Transverse colon (tissue), 4 donors: ENCODE measurements at regions of chr11 and their contacts with region 1.

Region 1: DNA sequence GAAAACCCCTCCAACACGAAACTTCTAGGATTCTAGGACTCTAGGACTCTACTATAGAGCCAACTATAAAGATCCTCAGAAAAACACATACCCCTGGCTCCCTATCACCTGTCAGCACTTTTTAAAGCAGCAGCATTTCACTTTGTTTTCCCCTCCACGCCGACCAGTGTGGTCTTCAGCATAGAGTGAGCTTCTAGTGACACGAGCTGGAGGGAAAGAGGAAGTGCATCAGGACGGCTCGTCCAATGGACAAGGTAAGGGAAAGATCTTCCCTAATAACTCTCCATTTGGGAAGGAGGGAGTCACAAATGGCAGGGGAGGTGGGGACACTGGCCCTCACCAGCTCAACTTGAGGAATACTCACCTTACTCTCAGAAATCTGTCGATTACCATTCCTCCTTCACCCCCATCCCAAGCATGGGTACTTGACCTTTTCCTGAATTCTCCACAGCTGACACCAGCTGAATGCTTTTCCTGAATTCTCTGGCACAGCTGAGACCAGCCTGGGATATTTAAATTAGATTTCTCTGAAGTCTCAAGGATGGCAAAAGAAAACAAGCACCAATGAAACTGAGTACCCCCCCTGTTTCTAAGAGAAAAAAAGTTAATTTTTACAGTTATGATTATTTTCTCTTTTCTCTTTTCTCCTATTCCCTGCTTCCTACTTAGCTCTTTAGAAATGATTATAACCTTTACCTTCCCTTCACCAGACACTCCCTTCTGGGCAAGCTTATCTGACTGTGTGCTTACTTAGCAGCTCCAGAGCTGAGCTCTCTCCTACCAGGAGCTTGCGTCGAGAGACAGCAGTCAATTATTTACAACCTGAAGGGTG is 33.3 kb upstream of the NNMT start:
- DNase-seq: no peak
- H3K4me3 ChIP-seq: no peak overlapping the region
- H3K27ac ChIP-seq: no peak overlapping the region
- H3K4me1 ChIP-seq: peaks cover 0 to 32% (median 16%) of the 10 kb centered on the region in 4 donors
- H3K27me3 ChIP-seq: peaks cover 9% of the 10 kb centered on the region
- CTCF ChIP-seq: peak; percentile 56 to 67 (median 62)
- EP300 ChIP-seq: no peak
- POLR2A ChIP-seq: no peak

Region 2: GRCh38 chr11:113875234-113876073 is 387.4 kb before region 1 on chr11 and contains the start of gene USP28:
- in situ Hi-C with region 1: loop called in 1 of 4 experiments (anchors 25 kb)
- intact Hi-C with region 1: no loop called
- DNase-seq: peak; percentile 98
- H3K4me3 ChIP-seq: peak within 1 kb of the TSS; percentile 73 to 81 (median 76)
- H3K27ac ChIP-seq: peak within 1 kb of the TSS; percentile 80 to 95 (median 88)
- H3K4me1 ChIP-seq: peaks cover 4 to 23% (median 14%) of the 10 kb centered on the region in 4 donors
- H3K27me3 ChIP-seq: no peaks in the 10 kb centered on the region
- CTCF ChIP-seq: peak in 1 of 5 experiments; percentile 13
- EP300 ChIP-seq: no peak
- POLR2A ChIP-seq: peak; percentile 85
- total RNA-seq, gene USP28: 10.1 to 28.3 (median 19.0) TPM

Region 3: DNA sequence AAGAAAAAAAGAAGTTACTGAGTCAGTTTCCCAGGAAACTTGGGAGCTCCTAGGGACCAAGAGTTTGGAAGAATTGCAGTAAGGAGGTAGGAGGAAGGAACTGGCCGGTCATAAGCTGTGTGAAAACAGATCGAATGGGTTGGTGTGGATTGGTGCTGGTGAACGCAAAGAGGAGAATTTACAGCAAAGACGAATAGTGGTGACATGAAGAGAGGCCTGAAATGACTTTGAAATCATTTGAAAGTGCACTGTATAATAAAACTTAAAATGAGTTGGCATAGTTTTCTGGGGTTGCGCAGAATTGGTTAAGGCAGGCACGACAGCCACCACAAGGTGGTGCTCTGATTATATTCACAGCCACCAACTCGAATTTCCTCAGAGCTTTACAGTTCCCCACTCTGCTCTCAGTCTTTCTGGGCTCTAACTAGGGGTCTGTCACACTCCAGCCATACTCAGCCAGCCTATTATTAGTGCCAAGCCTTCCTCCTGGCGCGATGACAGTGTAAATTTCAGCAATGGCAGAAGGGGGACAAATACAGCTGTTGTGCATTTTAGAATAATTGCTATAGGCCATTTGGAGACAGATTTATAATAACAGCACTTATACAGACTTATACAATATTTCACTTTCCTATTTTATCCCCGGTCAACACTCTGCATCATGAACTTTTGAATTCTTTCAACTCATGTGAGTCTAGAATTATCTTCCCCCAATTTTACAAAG is 366.6 kb before region 1 on chr11:
- in situ Hi-C with region 1: loop called (anchors 5 to 25 kb)
- intact Hi-C with region 1: loop called (anchors 5 kb)
- DNase-seq: peak; percentile 39
- H3K4me3 ChIP-seq: no peak overlapping the region
- H3K27ac ChIP-seq: no peak overlapping the region
- H3K4me1 ChIP-seq: no peaks in the 10 kb centered on the region
- H3K27me3 ChIP-seq: no peaks in the 10 kb centered on the region
- CTCF ChIP-seq: peak; percentile 65 to 81 (median 78)
- EP300 ChIP-seq: no peak
- POLR2A ChIP-seq: no peak

Region 4: DNA sequence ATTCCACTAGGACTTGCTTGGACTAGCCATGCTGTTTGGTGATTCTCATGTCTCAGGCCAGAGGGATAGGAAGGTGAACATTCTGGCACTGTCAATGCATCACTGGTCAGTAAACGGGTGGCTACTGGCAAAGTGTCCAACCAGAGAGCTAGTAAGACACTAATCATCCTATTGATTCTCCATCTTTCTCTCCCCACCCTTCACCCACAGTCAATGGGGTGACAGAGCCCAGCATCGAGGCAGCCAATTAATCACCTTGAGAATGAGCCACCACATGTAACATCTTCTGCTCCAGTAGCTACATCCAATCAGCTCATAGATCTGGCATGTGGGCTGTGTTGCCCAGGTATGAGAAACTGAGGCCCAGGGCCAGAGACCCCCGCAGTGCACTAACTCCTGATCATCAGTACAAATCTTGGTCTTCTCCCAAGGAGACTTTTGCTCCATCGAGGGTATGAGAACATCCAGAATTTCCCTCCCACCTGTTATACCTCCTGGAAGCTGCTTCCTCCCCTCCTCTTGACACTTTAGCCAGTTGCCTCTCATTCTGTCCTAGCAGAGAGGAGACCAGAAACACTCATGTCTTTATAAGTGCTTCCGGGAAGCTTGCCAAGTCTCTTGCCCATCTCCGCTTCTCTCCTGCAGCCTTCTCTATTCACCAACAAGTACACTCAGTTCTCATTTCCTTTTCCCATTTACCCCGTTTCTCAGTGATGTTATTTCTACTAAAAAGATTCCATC is 271.0 kb before region 1 on chr11:
- in situ Hi-C with region 1: no loop called
- intact Hi-C with region 1: loop called (anchors 2 kb)
- DNase-seq: no peak
- H3K4me3 ChIP-seq: no peak overlapping the region
- H3K27ac ChIP-seq: no peak overlapping the region
- H3K4me1 ChIP-seq: no peaks in the 10 kb centered on the region
- H3K27me3 ChIP-seq: peaks cover 43% of the 10 kb centered on the region
- CTCF ChIP-seq: no peak
- EP300 ChIP-seq: no peak
- POLR2A ChIP-seq: no peak

Region 5: DNA sequence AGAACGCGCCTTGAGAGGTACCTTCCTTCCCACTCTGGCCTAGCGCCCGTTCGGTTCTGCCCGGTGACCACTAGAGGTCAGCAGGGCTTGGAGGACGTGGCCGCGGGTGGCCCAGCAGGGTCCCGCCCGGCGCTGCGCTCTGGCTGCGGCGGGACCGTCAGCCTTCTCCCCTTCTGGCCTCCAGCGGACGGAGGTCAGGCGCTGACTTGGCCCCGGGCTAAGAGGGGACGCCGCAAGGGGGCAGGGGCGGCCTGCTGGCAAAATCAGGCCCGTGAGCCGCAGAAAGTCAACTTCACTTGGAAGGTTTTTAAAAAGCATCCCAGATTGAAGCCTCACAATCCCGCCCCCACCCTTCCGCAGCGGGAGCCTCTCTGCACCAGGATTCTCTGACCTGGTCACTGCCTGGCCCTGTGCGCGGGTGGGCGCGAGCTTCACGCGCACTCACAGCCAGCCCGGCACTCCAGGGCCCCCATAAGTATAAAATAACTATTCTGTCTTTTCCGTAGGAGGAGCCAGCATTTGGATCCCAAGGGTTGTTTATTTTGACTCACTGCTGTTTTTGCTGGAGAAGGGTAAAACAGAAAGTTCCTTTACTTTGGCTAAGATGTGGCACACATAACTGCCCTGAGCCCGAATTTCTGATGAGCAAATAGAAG is 226.6 kb before region 1 on chr11:
- in situ Hi-C with region 1: loop called in 3 of 4 experiments (anchors 5 to 25 kb)
- intact Hi-C with region 1: loop called (anchors 5 kb)
- DNase-seq: peak; percentile 88
- H3K4me3 ChIP-seq: peak overlapping the region in 3 of 4 donors; percentile 21 to 38 (median 29)
- H3K27ac ChIP-seq: peak overlapping the region; percentile 56 to 75 (median 62)
- H3K4me1 ChIP-seq: peaks cover 11 to 29% (median 25%) of the 10 kb centered on the region in 4 donors
- H3K27me3 ChIP-seq: no peaks in the 10 kb centered on the region
- CTCF ChIP-seq: peak; percentile 85 to 93 (median 88)
- EP300 ChIP-seq: no peak
- POLR2A ChIP-seq: no peak

Region 6: DNA sequence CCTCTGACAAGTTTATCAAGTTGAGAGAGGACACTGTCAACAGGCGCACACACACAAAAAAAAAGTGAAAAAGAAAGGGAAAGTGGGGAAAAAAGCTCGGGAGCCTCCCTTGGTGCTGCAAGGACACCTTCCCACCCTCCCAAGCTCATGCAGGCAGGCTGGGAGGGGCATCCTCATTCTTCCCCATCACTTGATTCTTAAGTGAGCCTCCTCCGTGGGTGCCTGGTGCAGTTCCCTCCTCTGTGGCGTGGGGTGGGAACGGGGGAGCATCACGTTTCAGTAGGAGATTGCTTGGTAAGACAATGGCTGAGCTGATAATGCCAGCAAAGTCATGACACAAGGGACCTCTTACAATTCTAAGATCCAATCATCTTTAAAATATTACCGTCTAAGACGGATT is 524.2 kb after region 1 on chr11:
- in situ Hi-C with region 1: no loop called
- intact Hi-C with region 1: no loop called
- DNase-seq: no peak
- H3K4me3 ChIP-seq: no peak overlapping the region
- H3K27ac ChIP-seq: no peak overlapping the region
- H3K4me1 ChIP-seq: peaks cover 0 to 11% (median 3%) of the 10 kb centered on the region in 4 donors
- H3K27me3 ChIP-seq: no peaks in the 10 kb centered on the region
- CTCF ChIP-seq: no peak
- EP300 ChIP-seq: no peak
- POLR2A ChIP-seq: no peak